CD14-positive monocyte (primary cell): ENCODE measurements at regions of chr12 and their contacts with region 1.

Region 1: DNA sequence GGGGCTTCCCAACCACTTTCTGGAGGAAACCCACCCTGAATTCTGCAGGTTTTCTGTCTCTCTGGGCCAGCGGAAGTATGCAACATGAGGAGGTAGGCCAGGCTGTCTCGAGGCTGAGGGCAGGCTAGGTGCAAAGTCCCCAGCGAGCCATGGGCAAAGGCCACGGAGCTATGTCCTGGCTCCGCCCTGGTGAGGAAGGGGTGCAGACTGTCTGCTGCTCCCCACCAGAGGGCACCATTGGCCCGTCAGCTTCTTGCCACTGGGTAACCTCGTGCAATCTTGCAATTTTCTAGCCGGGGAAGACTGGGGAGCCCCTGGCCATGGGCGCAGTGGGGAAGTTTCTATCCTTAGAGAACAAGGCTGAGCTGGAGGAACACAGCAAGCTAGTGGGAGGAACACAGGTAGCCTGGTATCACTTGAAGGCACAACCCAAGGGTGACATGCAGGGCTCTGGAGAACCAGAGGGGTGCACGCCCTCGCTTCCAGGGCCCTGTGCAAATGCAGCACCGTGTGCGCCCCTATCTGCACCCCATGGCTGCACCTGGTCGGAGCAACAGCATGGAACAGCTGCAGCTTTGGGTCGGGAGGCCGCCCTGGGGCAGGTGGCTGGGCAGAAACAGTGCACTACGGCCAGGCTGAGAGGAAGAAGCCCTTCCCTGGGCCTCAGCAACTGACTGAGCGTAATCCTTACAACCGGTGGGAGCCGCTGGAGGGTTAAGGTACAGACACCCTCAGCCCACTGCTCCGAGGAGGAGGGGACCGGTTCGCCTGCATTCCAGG is 27.6 kb upstream of the RPLP0 start:
- DNase-seq: peak; percentile 78 to 86 (median 82)
- H3K4me3 ChIP-seq: peak overlapping the region in 1 of 3 experiments; percentile 70
- H3K4me3 Mint-ChIP-seq: peak overlapping the region; percentile 56 to 89
- H3K27ac ChIP-seq: peak overlapping the region; percentile 21 to 94
- H3K27ac Mint-ChIP-seq: peak overlapping the region; percentile 75 to 98 (median 85)
- H3K4me1 ChIP-seq: peaks cover 90 to 94% of the 10 kb centered on the region in 2 donors
- H3K4me1 Mint-ChIP-seq: peaks cover 92% of the 10 kb centered on the region
- H3K27me3 ChIP-seq: no peaks in the 10 kb centered on the region
- H3K27me3 Mint-ChIP-seq: peaks cover 0 to 1% (median 0%) of the 10 kb centered on the region in 3 donors
- CTCF ChIP-seq: peak; percentile 92

Region 2: DNA sequence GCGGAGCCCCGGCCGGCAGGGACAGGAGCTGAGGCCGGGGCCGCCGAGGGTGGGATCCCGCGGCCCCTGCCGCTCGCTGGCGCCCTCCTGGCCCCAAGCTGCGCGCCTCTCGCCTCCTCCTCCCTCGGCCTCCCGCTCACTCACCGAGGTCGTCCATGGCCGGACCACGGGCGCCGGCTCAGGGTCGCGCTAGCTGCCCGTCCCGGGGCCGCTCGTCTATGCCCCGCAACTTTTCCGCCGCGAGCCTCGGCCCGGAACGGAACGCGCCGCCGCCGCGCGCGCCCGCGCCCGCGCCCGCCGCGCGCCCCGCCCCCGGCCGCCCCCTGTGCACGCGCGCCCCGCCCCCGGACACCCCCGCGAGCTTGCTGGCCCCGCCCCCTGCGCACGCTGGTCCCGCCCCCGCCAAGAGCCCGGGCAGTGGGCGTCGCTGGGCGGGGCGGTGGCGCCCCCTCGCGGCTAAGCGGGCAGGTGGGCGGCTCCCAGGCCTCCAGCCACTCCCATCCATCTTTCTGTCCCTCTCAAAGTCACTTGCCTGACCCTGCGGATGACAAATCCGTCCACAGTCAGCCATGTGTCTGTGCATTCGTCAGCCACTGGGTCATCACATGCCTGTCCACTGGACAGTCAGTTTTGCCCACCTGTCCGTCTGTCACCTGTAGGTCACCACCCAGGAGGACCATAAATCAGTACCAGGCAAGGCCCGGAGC is 37.1 kb after region 1 on chr12 and contains the start of gene PXN:
- intact Hi-C with region 1: loop called (anchors 2 kb)
- DNase-seq: peak; percentile 81 to 91 (median 82)
- H3K4me3 ChIP-seq: peak within 1 kb of the TSS; percentile 76 to 93 (median 92)
- H3K4me3 Mint-ChIP-seq: peak within 1 kb of the TSS; percentile 94 to 97
- H3K27ac ChIP-seq: peak within 1 kb of the TSS; percentile 34 to 85
- H3K27ac Mint-ChIP-seq: peak within 1 kb of the TSS; percentile 83 to 96 (median 89)
- H3K4me1 ChIP-seq: peaks cover 46 to 53% of the 10 kb centered on the region in 2 donors
- H3K4me1 Mint-ChIP-seq: peaks cover 52% of the 10 kb centered on the region
- H3K27me3 ChIP-seq: no peaks in the 10 kb centered on the region
- H3K27me3 Mint-ChIP-seq: peaks cover 0 to 3% (median 2%) of the 10 kb centered on the region in 3 donors
- CTCF ChIP-seq: peak; percentile 78
- polyA plus RNA-seq, gene PXN: 62.5 to 106 (median 98.4) TPM